ENCODE measurements at regions of chr6 and their contacts with region 1.

Region 1: DNA sequence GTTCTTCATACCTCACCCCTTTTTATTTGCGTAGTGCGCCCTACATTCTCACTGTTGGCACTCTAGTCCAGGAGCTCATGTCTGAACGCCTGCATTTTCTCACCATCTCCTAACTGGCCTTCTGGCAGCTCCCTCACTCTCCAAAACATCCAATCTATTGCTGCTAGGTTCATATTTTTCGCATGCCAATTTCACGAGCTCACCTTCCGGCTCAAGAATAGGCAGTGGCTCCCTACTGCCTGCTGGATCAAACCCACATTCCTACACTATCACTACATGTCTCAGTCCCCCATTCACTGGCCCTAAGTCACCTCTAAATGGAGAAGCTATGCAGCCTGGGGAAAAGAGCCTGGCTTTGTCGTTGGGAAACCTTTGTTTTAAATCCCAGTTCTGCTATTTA is 115.0 kb downstream of the IPCEF1 start:
- DNase-seq: no peak
- ATAC-seq: no peak
- H3K4me3 ChIP-seq: 0 out of 2 replicates have a peak overlapping the region, but pooled peaks have one; percentile 34
- H3K27ac ChIP-seq: no peak overlapping the region
- H3K4me1 ChIP-seq: peaks cover 4% of the 10 kb centered on the region; the same call in 1 of the 2 replicates
- H3K27me3 ChIP-seq: no peaks in the 10 kb centered on the region
- CTCF ChIP-seq: no peak
- EP300 ChIP-seq: no peak
- POLR2A ChIP-seq: no peak
- RAD21 ChIP-seq: no peak

Region 2: DNA sequence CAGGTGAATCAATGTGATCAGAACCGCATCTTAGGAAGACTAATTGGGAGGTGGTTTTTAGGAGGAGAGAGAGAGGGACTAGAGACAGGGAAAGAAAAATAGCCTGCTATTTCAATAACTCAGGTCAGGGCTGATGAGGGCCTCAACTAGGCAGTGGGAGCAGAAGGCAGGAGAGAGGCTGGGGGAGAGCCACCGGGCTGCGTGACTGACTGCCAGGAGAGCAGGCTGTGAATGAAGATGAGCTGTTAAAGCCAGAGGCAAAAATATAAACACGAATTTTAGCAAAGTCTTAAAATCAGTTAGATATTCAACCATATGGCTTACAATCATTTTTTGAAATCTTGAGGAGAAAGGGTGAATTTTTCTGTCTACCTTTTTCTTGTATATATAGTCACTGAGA is 34.6 kb before region 1 on chr6:
- CTCF ChIA-PET with region 1: no interaction called
- POLR2A ChIA-PET with region 1: no interaction called
- RAD21 ChIA-PET with region 1: no interaction called
- SMC1A ChIA-PET with region 1: no interaction called
- in situ Hi-C with region 1: no loop called
- intact Hi-C with region 1: no loop called
- DNase-seq: no peak
- ATAC-seq: no peak
- H3K4me3 ChIP-seq: no peak overlapping the region
- H3K27ac ChIP-seq: no peak overlapping the region
- H3K4me1 ChIP-seq: no peaks in the 10 kb centered on the region
- H3K27me3 ChIP-seq: no peaks in the 10 kb centered on the region
- CTCF ChIP-seq: no peak
- EP300 ChIP-seq: no peak
- POLR2A ChIP-seq: no peak
- RAD21 ChIP-seq: no peak

Region 3: DNA sequence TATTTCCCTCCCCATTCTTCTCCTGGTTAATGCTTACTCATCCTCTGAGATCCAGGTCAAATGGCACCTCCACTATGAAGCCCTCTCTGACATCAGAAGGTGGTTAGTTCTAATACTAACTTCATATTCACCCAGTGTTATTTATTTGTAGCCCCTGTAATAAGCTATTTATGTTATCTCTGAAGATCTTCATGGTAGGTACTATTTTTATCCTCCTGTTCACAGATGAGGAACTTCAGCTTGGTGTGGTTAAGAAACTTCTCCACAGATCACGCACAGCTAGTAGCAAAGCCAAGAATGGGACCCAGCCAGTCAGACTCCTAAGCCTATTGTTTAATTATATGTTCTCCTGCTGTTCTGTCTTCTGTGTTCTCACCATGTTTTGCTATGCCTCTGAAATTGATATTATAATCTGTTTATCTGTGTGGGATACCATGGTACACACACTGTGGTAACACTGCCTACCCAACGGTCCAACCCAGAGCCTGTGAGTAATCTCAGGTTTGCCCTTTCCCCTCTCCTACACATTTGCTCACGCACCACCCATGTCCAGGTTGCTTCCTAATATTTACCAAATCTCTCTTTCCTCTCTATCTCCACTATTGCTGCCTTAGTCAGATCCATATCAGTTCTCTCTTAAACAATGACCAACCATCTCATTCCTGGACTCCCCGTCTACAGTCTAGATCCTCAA is 16.6 kb after region 1 on chr6:
- CTCF ChIA-PET with region 1: interaction called, 13 read pairs
- POLR2A ChIA-PET with region 1: interaction called, 17 read pairs
- RAD21 ChIA-PET with region 1: interaction called, 30 read pairs
- SMC1A ChIA-PET with region 1: interaction called, 86 read pairs
- in situ Hi-C with region 1: no loop called
- intact Hi-C with region 1: no loop called
- DNase-seq: no peak
- ATAC-seq: peak; percentile 77
- H3K4me3 ChIP-seq: no peak overlapping the region
- H3K27ac ChIP-seq: peak overlapping the region; percentile 61
- H3K4me1 ChIP-seq: peaks cover 41% of the 10 kb centered on the region
- H3K27me3 ChIP-seq: no peaks in the 10 kb centered on the region
- CTCF ChIP-seq: no peak
- EP300 ChIP-seq: peak in 1 of 2 experiments; percentile 79; a peak in 3 of 4 replicates
- POLR2A ChIP-seq: no peak
- RAD21 ChIP-seq: no peak